PC-3 (cell line): ENCODE measurements at regions of chr2 and their contacts with region 1.

Region 1: GRCh38 chr2:206597717-206598218 is 44.5 kb upstream of the FAM237A start:
- DNase-seq: no peak
- ATAC-seq: no peak
- H3K4me3 ChIP-seq: no peak overlapping the region
- H3K27ac ChIP-seq: no peak overlapping the region
- H3K4me1 ChIP-seq: no peaks in the 10 kb centered on the region
- H3K27me3 ChIP-seq: no peaks in the 10 kb centered on the region
- CTCF ChIP-seq: no peak

Region 2: GRCh38 chr2:206657087-206657486 is 59.3 kb after region 1 on chr2:
- CTCF ChIA-PET with region 1: no interaction called
- POLR2A ChIA-PET with region 1: interaction called, 12 read pairs
- intact Hi-C with region 1: no loop called
- DNase-seq: peak; percentile 53
- ATAC-seq: no peak
- H3K4me3 ChIP-seq: no peak overlapping the region
- H3K27ac ChIP-seq: no peak overlapping the region
- H3K4me1 ChIP-seq: no peaks in the 10 kb centered on the region
- H3K27me3 ChIP-seq: peaks cover 2% of the 10 kb centered on the region; the same call in 1 of the 2 replicates
- CTCF ChIP-seq: no peak

Region 3: DNA sequence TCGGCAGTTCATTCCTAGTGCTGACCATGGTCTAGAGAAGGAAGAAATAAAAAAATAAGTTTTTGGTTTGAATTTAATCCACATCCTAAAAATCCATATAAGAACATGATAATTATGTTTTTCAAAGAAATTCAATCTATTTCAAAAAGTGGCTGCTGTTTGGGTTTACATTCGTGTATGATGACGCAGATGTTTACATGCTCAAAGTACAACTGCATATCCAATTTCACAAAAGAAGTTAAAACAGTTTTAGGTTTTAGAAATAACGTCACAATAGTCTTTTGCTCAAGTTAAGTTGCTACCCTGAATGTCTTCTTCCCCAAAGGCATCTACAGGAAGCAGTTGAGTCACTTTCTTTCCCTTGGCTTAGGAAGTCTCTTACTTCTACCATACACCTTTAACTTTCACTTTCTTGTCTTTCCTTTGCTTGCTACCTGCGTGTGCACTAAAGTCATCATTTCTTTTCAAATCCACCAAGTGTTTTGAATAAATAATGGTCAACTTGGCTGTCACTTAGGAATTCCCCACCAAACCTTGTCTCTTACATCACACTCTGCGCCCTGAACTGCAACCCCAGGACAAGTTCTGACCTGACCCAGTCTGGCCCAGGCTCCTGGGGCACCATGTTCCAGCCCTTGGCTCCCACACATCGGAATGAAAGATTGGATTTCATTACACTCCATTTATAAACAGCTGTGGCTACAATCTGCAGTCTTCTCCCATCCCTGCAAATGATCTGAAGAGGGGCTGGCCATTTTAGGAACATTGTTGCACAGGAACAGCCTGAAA is 73.0 kb after region 1 on chr2:
- CTCF ChIA-PET with region 1: no interaction called
- POLR2A ChIA-PET with region 1: no interaction called
- intact Hi-C with region 1: no loop called
- DNase-seq: no peak
- ATAC-seq: no peak
- H3K4me3 ChIP-seq: no peak overlapping the region
- H3K27ac ChIP-seq: no peak overlapping the region
- H3K4me1 ChIP-seq: no peaks in the 10 kb centered on the region
- H3K27me3 ChIP-seq: peaks cover 6% of the 10 kb centered on the region; the same call in 1 of the 2 replicates
- CTCF ChIP-seq: no peak

Region 4: GRCh38 chr2:207041279-207041678 is 443.5 kb after region 1 on chr2:
- CTCF ChIA-PET with region 1: no interaction called
- POLR2A ChIA-PET with region 1: no interaction called
- intact Hi-C with region 1: no loop called
- DNase-seq: no peak
- ATAC-seq: no peak
- H3K4me3 ChIP-seq: no peak overlapping the region
- H3K27ac ChIP-seq: no peak overlapping the region
- H3K4me1 ChIP-seq: no peaks in the 10 kb centered on the region
- H3K27me3 ChIP-seq: no peaks in the 10 kb centered on the region
- CTCF ChIP-seq: no peak